KBM-7 (cell line): ENCODE measurements at regions of chr19 and their contacts with region 1.

Region 1: GRCh38 chr19:38319421-38320258 is at the start of gene KCNK6:
- DNase-seq: peak; percentile 50

Region 2: GRCh38 chr19:38250821-38251563 is 68.6 kb before region 1 on chr19:
- in situ Hi-C with region 1: loop called (anchors 10 kb)
- DNase-seq: no peak